Astrocyte of the cerebellum (primary cell): ENCODE measurements at regions of chr1 and their contacts with region 1.

Region 1: DNA sequence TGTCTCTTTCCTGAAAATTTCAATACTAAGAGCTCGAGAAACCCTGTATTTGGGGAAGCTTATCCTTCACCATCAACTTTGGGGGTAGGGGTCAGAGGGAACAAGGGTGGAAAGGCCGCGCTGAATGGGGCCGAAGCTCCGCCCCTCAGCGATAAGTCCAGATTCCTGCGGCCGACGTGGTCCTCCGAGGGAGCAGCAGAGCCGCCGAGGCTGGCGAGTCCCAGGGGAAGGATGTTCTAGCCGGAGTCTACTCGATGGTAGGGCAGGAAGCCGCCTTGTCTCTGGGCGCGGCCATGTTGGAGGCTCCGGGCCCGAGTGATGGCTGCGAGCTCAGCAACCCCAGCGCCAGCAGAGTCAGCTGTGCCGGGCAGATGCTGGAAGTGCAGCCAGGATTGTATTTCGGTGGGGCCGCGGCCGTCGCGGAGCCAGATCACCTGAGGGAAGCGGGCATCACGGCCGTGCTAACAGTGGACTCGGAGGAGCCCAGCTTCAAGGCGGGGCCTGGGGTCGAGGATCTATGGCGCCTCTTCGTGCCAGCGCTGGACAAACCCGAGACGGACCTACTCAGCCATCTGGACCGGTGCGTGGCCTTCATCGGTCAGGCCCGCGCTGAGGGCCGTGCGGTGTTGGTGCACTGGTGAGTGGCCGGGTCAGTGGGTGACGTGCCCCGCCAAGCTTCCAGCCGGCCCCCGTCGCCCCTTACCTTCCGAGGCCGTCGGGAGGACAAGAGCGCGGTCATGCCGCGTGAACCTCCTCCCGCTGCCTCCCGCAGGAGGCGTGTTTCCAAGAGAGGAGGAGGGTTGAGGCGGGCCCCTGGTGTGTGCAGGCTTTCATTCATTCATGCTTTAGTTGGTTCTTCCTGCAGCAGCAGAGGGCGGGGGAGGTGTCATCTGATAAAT is at the start of gene DUSP12:
- DNase-seq: peak; percentile 89
- H3K4me3 ChIP-seq: peak within 1 kb of the TSS; percentile 70
- CTCF ChIP-seq: no peak

Region 2: GRCh38 chr1:161201828-161202725 is 547.7 kb before region 1 on chr1 and contains the start of gene NDUFS2:
- in situ Hi-C with region 1: loop called (anchors 25 kb)
- DNase-seq: peak; percentile 99
- H3K4me3 ChIP-seq: peak within 1 kb of the TSS; percentile 97
- CTCF ChIP-seq: peak; percentile 57

Region 3: GRCh38 chr1:161691846-161692245 is 57.9 kb before region 1 on chr1:
- in situ Hi-C with region 1: no loop called
- DNase-seq: no peak
- H3K4me3 ChIP-seq: no peak overlapping the region
- CTCF ChIP-seq: no peak